ENCODE measurements at regions of chr5 and their contacts with region 1.

Region 1: GRCh38 chr5:148957591-148958202 is 105.2 kb downstream of the SH3TC2 start:
- DNase-seq: peak; percentile 74
- ATAC-seq: no peak; the same call in 1 of the 2 replicates
- H3K4me3 Mint-ChIP-seq: no peak overlapping the region
- H3K27ac Mint-ChIP-seq: no peak overlapping the region
- H3K4me1 Mint-ChIP-seq: peaks cover 23% of the 10 kb centered on the region
- H3K27me3 Mint-ChIP-seq: peaks cover 8% of the 10 kb centered on the region
- CTCF ChIP-seq: peak; percentile 85

Region 2: GRCh38 chr5:148740966-148741742 is 216.5 kb before region 1 on chr5:
- CTCF ChIA-PET with region 1: interaction called, 60 read pairs
- POLR2A ChIA-PET with region 1: no interaction called
- DNase-seq: no peak
- ATAC-seq: peak; percentile 64; the same call in 1 of the 2 replicates
- H3K4me3 Mint-ChIP-seq: no peak overlapping the region
- H3K27ac Mint-ChIP-seq: no peak overlapping the region
- H3K4me1 Mint-ChIP-seq: no peaks in the 10 kb centered on the region
- H3K27me3 Mint-ChIP-seq: no peaks in the 10 kb centered on the region; the same call in 1 of the 2 replicates
- CTCF ChIP-seq: peak; percentile 39; the same call in 1 of the 2 replicates

Region 3: GRCh38 chr5:148776780-148777179 is 180.9 kb before region 1 on chr5:
- CTCF ChIA-PET with region 1: interaction called, 11 read pairs
- POLR2A ChIA-PET with region 1: interaction called, 3 read pairs
- DNase-seq: no peak
- ATAC-seq: no peak
- H3K4me3 Mint-ChIP-seq: no peak overlapping the region
- H3K27ac Mint-ChIP-seq: no peak overlapping the region
- H3K4me1 Mint-ChIP-seq: peaks cover 14% of the 10 kb centered on the region
- H3K27me3 Mint-ChIP-seq: no peaks in the 10 kb centered on the region
- CTCF ChIP-seq: no peak

Region 4: DNA sequence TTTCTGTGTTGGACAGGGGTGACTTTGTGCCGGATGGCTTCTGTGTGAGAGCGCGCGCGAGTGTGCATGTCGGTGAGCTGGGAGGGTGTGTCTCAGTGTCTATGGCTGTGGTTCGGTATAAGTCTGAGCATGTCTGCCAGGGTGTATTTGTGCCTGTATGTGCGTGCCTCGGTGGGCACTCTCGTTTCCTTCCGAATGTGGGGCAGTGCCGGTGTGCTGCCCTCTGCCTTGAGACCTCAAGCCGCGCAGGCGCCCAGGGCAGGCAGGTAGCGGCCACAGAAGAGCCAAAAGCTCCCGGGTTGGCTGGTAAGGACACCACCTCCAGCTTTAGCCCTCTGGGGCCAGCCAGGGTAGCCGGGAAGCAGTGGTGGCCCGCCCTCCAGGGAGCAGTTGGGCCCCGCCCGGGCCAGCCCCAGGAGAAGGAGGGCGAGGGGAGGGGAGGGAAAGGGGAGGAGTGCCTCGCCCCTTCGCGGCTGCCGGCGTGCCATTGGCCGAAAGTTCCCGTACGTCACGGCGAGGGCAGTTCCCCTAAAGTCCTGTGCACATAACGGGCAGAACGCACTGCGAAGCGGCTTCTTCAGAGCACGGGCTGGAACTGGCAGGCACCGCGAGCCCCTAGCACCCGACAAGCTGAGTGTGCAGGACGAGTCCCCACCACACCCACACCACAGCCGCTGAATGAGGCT is 131.5 kb before region 1 on chr5 and contains the start of gene ADRB2:
- CTCF ChIA-PET with region 1: interaction called, 63 read pairs
- POLR2A ChIA-PET with region 1: no interaction called
- DNase-seq: peak; percentile 93
- ATAC-seq: peak; percentile 98
- H3K4me3 Mint-ChIP-seq: peak within 1 kb of the TSS; percentile 84
- H3K27ac Mint-ChIP-seq: peak within 1 kb of the TSS; percentile 9
- H3K4me1 Mint-ChIP-seq: peaks cover 58% of the 10 kb centered on the region
- H3K27me3 Mint-ChIP-seq: peaks cover 46% of the 10 kb centered on the region
- CTCF ChIP-seq: no peak
- total RNA-seq, gene ADRB2: 1.1 to 1.3 TPM (median 1.2 TPM) in 3 replicates

Region 5: GRCh38 chr5:148844433-148845280 is 113.0 kb before region 1 on chr5:
- CTCF ChIA-PET with region 1: interaction called, 10 read pairs
- POLR2A ChIA-PET with region 1: no interaction called
- DNase-seq: no peak
- ATAC-seq: no peak; the same call in 1 of the 2 replicates
- H3K4me3 Mint-ChIP-seq: no peak overlapping the region
- H3K27ac Mint-ChIP-seq: no peak overlapping the region
- H3K4me1 Mint-ChIP-seq: no peaks in the 10 kb centered on the region
- H3K27me3 Mint-ChIP-seq: no peaks in the 10 kb centered on the region
- CTCF ChIP-seq: no peak

Region 6: GRCh38 chr5:148931453-148932066 is 26.1 kb before region 1 on chr5:
- CTCF ChIA-PET with region 1: interaction called, 14 read pairs
- POLR2A ChIA-PET with region 1: interaction called, 3 read pairs
- DNase-seq: no peak
- ATAC-seq: no peak
- H3K4me3 Mint-ChIP-seq: no peak overlapping the region
- H3K27ac Mint-ChIP-seq: no peak overlapping the region
- H3K4me1 Mint-ChIP-seq: peaks cover 58% of the 10 kb centered on the region
- H3K27me3 Mint-ChIP-seq: no peaks in the 10 kb centered on the region
- CTCF ChIP-seq: no peak

Region 7: GRCh38 chr5:148979104-148979723 is 21.5 kb after region 1 on chr5:
- CTCF ChIA-PET with region 1: interaction called, 74 read pairs
- POLR2A ChIA-PET with region 1: interaction called, 3 read pairs
- DNase-seq: no peak
- ATAC-seq: no peak
- H3K4me3 Mint-ChIP-seq: no peak overlapping the region
- H3K27ac Mint-ChIP-seq: no peak overlapping the region
- H3K4me1 Mint-ChIP-seq: peaks cover 47% of the 10 kb centered on the region
- H3K27me3 Mint-ChIP-seq: no peaks in the 10 kb centered on the region
- CTCF ChIP-seq: no peak